Endothelial cell of umbilical vein (primary cell): ENCODE measurements at regions of chr1 and their contacts with region 1.

Region 1: DNA sequence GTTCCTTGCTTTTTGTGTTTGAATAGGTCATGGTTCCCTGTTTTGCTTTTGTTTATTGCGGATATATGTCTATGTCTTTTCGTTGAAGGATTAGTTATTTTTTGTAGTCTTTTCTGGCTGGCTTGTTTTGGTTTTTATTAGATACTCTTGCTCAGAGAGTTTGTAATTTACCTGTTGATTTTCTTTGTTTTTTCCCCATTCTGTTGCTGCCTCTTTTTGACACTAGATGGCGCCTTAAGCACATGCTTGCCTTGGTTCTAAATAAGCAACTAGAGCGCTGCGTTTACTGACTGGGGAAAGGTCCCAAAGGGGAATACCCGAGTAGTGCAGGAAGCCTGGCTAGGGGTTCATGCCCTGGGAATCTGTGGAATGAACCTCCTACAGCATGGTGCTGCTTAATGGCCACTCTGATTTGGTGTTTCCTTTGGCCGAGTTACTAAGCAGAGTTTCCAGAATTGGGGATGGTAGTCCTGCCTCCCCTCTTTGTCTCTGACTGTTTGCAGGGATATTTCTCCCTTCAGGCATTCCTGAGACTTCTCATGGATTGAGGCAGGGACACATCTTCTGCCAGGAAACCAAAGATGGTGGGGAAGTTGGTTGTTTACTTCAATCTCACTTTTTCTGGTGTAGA is 143.2 kb downstream of the PTPRU start:
- DNase-seq: peak; percentile 65
- H3K4me3 ChIP-seq: no peak overlapping the region
- H3K27ac ChIP-seq: no peak overlapping the region
- H3K4me1 ChIP-seq: peaks cover 13% of the 10 kb centered on the region
- H3K27me3 ChIP-seq: no peaks in the 10 kb centered on the region
- CTCF ChIP-seq: peak; percentile 62 to 68
- POLR2A ChIP-seq: no peak

Region 2: GRCh38 chr1:28329395-28330153 is 1050.0 kb before region 1 on chr1:
- CTCF ChIA-PET with region 1: no interaction called
- POLR2A ChIA-PET with region 1: interaction called, 11 read pairs
- dilution Hi-C with region 1: no loop called
- intact Hi-C with region 1: no loop called
- DNase-seq: peak; percentile 25
- H3K4me3 ChIP-seq: peak overlapping the region; percentile 62 to 93 (median 78)
- H3K27ac ChIP-seq: peak overlapping the region; percentile 91
- H3K4me1 ChIP-seq: peaks cover 11% of the 10 kb centered on the region
- H3K27me3 ChIP-seq: no peaks in the 10 kb centered on the region
- CTCF ChIP-seq: no peak
- POLR2A ChIP-seq: no peak

Region 3: DNA sequence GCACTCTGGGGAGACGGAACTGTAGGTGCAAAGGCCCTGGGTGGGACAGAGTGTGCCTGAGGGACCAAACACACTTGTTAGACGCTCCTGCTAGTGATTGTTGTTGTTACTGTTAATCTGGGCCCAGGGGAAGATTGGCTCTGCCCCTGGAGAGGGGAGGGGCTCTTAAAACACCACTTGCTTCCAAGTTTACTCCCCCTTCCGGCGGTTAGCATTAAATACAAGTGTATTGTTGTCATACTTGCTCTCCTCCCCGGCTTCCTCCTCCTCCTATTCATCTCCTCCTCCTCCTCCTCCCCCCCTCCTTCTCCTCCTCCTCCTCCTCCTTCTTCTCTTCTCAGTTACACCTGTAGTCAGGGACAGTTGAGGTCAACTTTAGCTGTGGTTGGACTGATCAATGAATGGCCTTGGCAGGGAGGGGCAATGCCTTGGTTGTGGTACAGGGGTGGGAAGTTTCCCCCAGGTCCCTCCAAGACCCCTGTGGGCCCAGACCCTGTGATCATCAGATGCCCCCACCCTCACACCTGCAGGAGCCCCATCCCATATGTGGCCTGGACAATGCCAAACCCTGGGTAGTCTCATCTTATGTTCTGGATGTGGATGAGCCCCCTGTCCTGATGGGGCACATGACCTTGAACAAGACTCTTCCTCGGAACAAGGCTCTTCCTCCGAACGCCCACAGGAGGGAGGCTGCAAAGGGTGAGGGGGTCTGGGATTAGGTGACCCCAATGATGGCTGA is 74.1 kb after region 1 on chr1:
- CTCF ChIA-PET with region 1: no interaction called
- POLR2A ChIA-PET with region 1: no interaction called
- dilution Hi-C with region 1: no loop called
- intact Hi-C with region 1: loop called (anchors 2 kb)
- DNase-seq: peak; percentile 26
- H3K4me3 ChIP-seq: no peak overlapping the region
- H3K27ac ChIP-seq: no peak overlapping the region
- H3K4me1 ChIP-seq: no peaks in the 10 kb centered on the region
- H3K27me3 ChIP-seq: no peaks in the 10 kb centered on the region
- CTCF ChIP-seq: peak; percentile 6 to 18
- POLR2A ChIP-seq: no peak

Region 4: GRCh38 chr1:29708901-29709710 is 329.5 kb after region 1 on chr1:
- CTCF ChIA-PET with region 1: interaction called, 9 read pairs
- POLR2A ChIA-PET with region 1: no interaction called
- dilution Hi-C with region 1: no loop called
- intact Hi-C with region 1: loop called (anchors 1 kb)
- DNase-seq: no peak
- H3K4me3 ChIP-seq: no peak overlapping the region
- H3K27ac ChIP-seq: peak overlapping the region; percentile 95
- H3K4me1 ChIP-seq: peaks cover 48% of the 10 kb centered on the region
- H3K27me3 ChIP-seq: peaks cover 10 to 12% of the 10 kb centered on the region in 2 experiments
- CTCF ChIP-seq: no peak
- POLR2A ChIP-seq: peak; percentile 60

Region 5: GRCh38 chr1:29849038-29849750 is 469.6 kb after region 1 on chr1:
- CTCF ChIA-PET with region 1: no interaction called
- POLR2A ChIA-PET with region 1: no interaction called
- dilution Hi-C with region 1: no loop called
- intact Hi-C with region 1: loop called (anchors 1 kb)
- DNase-seq: peak; percentile 21
- H3K4me3 ChIP-seq: no peak overlapping the region
- H3K27ac ChIP-seq: no peak overlapping the region
- H3K4me1 ChIP-seq: no peaks in the 10 kb centered on the region
- H3K27me3 ChIP-seq: no peaks in the 10 kb centered on the region
- CTCF ChIP-seq: peak; percentile 23 to 34
- POLR2A ChIP-seq: no peak

Region 6: GRCh38 chr1:30106125-30106524 is 726.6 kb after region 1 on chr1:
- CTCF ChIA-PET with region 1: no interaction called
- POLR2A ChIA-PET with region 1: no interaction called
- dilution Hi-C with region 1: no loop called
- intact Hi-C with region 1: loop called (anchors 1 kb)
- DNase-seq: peak; percentile 14
- H3K4me3 ChIP-seq: no peak overlapping the region
- H3K27ac ChIP-seq: no peak overlapping the region
- H3K4me1 ChIP-seq: no peaks in the 10 kb centered on the region
- H3K27me3 ChIP-seq: peaks cover 0 to 1% of the 10 kb centered on the region in 2 experiments
- CTCF ChIP-seq: peak; percentile 42 to 66
- POLR2A ChIP-seq: no peak

Region 7: DNA sequence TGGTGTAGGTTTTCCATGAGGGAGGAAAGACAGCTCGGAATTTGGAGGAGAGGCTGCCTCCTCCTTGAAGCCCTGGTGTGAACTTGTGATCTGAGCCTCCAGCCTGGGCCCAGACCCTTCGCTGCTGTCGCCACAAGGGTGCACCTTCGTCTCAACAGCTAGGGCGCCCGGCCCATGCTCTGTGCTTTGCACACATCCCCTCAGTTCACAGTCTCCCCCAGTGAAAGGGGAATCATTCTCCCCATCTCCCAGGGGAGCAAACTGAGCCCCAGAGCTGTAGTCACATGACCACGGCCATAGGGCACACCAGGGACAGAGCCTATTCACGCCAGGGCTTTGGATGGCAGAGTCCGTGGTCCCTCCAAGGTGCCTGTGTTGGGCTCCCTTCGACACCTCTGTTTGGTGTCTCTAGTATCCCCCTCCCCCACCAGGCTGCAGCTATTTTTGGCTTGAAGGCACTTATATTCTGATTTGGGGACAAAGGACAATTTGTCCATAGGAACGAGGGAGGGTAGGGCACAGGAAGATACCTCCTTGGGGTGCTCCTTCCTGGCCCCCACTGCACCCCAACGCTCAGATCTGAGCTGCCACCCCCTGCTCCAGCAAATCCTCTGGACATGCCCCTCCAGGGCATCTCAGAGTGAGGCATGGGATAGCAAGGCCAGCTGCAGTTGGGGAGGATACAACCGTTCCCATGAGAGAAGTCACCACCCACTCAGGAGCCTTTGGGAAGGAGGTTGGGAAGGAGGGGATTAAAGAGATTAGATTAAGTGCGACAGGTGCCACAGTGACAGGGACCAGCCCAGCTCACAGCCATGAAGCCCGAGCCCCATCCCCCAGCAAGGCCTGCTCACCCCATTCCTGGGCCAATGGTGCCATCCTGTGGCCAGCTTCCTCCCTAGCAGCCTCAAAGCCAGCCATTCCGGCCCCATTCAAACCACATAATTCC is 1328.1 kb after region 1 on chr1:
- CTCF ChIA-PET with region 1: interaction called, 8 read pairs
- POLR2A ChIA-PET with region 1: no interaction called
- dilution Hi-C with region 1: no loop called
- intact Hi-C with region 1: loop called (anchors 1 kb)
- DNase-seq: peak; percentile 50
- H3K4me3 ChIP-seq: no peak overlapping the region
- H3K27ac ChIP-seq: no peak overlapping the region
- H3K4me1 ChIP-seq: no peaks in the 10 kb centered on the region
- H3K27me3 ChIP-seq: peaks cover 0 to 3% of the 10 kb centered on the region in 2 experiments
- CTCF ChIP-seq: peak; percentile 84 to 88
- POLR2A ChIP-seq: no peak